Activated CD4-positive, alpha-beta T cell treated with anti-CD3 and anti-CD28 coated beads, Interleukin-2, amount 10 ng/mL, durations not matched to agents 24 days and 14 days (primary cell): ENCODE measurements at regions of chr7 and their contacts with region 1.

Region 1: GRCh38 chr7:2894118-2894940 is 50.2 kb upstream of the GNA12 start:
- DNase-seq: peak; percentile 86
- H3K4me3 Mint-ChIP-seq: peak overlapping the region; percentile 88
- H3K27ac Mint-ChIP-seq: peak overlapping the region; percentile 99
- H3K4me1 Mint-ChIP-seq: peaks cover 26% of the 10 kb centered on the region
- H3K27me3 Mint-ChIP-seq: no peaks in the 10 kb centered on the region

Region 2: DNA sequence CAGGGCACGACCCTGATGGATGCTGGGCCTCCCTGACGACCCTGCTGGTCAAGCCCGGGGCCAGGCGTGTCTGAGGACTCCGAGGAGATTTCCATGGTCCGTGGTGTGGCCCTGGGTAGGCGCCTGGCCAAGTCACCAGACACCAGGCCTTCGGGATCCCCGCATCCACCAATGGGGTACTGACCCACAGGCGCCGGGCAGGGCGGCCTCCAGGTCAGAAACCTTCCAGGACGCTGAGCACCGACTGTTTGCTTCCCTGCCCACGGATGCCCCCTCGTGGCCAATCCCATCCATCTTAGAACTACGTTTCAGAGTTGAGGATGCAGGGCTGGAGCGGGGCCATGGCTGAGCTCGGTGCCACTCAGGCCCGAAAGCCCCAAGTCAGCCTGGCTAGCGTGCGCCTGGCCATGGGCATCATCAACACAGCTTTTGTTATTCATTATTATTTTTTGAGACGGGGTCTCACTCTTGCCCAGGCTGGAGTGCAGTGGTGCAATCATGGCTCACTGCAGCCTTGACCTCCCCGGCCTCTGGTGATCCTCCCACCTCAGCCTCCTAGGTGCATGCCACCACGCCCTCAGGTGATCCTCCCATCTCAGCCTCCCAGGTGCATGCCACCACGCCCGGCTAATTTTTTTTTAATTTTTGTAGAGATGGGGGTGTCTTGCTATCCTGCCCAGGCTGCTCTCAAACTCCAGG is 213.4 kb before region 1 on chr7:
- intact Hi-C with region 1: no loop called
- DNase-seq: peak; percentile 86
- H3K4me3 Mint-ChIP-seq: no peak overlapping the region
- H3K27ac Mint-ChIP-seq: no peak overlapping the region
- H3K4me1 Mint-ChIP-seq: no peaks in the 10 kb centered on the region
- H3K27me3 Mint-ChIP-seq: peaks cover 13% of the 10 kb centered on the region

Region 3: GRCh38 chr7:2934211-2934731 is 39.9 kb after region 1 on chr7:
- intact Hi-C with region 1: loop called (anchors 1 kb)
- DNase-seq: no peak
- H3K4me3 Mint-ChIP-seq: no peak overlapping the region
- H3K27ac Mint-ChIP-seq: peak overlapping the region; percentile 92
- H3K4me1 Mint-ChIP-seq: peaks cover 6% of the 10 kb centered on the region
- H3K27me3 Mint-ChIP-seq: no peaks in the 10 kb centered on the region